Activated naive CD4-positive, alpha-beta T cell treated with anti-CD3 and anti-CD28 coated beads for 36 hours (primary cell): ENCODE measurements at regions of chr1 and their contacts with region 1.

Region 1: GRCh38 chr1:201468844-201469511 is at the start of gene PHLDA3:
- DNase-seq: peak; percentile 79
- H3K4me3 Mint-ChIP-seq: peak within 1 kb of the TSS; percentile 80
- H3K27ac Mint-ChIP-seq: peak within 1 kb of the TSS; percentile 44
- H3K4me1 Mint-ChIP-seq: peaks cover 6% of the 10 kb centered on the region
- H3K27me3 Mint-ChIP-seq: peaks cover 48% of the 10 kb centered on the region
- total RNA-seq, gene PHLDA3: 19.5 TPM

Region 2: DNA sequence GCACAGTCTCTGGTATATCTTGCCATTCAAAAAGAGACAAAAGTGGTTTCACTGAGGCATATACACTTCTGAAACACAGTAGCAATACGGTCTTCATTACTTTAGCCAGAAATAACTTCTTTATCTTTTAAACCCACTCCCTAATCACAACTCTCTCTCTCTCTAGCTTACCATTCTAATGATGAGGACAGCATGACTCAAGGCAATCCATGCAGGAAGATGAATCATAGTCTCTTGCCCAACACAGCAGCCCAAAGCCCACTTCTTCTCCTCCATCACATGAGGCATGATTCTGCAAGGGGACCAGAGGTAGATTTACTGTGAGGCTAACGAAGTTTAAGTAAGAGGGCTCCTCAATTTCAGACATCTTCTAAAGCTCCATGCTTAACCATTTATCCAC is 1726.4 kb before region 1 on chr1:
- CTCF ChIA-PET with region 1: no interaction called
- intact Hi-C with region 1: no loop called
- DNase-seq: no peak
- H3K4me3 Mint-ChIP-seq: no peak overlapping the region
- H3K27ac Mint-ChIP-seq: no peak overlapping the region
- H3K4me1 Mint-ChIP-seq: no peaks in the 10 kb centered on the region
- H3K27me3 Mint-ChIP-seq: peaks cover 12% of the 10 kb centered on the region

Region 3: DNA sequence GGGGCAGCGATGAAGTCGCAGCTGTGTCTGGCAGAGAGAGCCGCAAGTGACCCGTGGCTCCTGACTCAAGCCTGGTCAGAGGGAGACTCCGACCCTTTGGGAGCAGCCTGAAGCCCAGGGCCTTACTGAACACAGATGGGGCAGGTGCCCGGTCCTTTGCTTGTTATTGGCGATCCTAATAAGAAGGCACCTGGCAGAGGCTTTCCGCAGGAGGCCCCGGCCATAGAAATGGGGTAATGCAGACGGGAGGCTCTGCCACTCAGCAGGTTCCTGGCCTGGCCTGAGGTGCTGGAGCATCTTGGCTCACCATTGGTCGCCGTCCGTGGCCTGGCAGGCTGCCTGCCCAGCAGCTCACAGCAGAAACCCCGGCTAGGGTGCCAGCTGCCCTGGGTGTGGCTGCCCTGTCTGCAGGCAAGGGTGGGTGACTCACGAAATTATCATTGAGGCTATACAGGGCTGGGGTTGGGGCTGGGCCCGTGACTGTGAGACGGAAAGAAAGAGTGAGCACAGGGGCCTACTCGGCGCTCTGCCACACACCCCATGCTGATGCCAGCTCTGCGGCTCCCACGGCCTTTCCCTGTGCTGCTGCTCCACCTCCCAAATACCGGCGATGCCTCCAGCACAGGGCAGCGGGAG is 193.8 kb before region 1 on chr1:
- CTCF ChIA-PET with region 1: no interaction called
- intact Hi-C with region 1: no loop called
- DNase-seq: no peak
- H3K4me3 Mint-ChIP-seq: no peak overlapping the region
- H3K27ac Mint-ChIP-seq: no peak overlapping the region
- H3K4me1 Mint-ChIP-seq: no peaks in the 10 kb centered on the region
- H3K27me3 Mint-ChIP-seq: peaks cover 7% of the 10 kb centered on the region

Region 4: DNA sequence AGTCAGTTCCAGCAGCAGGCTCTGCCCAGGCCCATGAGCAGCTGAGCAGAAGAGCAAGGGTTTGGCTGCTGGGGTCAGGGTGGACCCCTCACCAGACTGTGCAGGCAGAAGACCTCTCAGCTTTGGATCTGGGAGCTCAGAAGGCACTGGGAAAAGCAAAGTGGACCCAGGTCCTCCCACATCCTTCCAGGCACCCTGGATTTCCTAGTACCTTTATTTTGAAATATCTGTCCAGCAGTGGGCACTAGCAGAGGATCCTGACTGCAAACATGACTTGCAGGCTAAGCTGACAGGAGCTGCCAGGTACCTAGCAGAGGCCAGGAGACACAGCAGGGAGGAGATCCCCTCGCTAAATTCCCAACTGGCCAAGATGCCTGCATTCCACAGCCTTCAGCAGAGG is 13.3 kb before region 1 on chr1:
- CTCF ChIA-PET with region 1: no interaction called
- intact Hi-C with region 1: loop called (anchors 1 kb)
- DNase-seq: no peak
- H3K4me3 Mint-ChIP-seq: no peak overlapping the region
- H3K27ac Mint-ChIP-seq: no peak overlapping the region
- H3K4me1 Mint-ChIP-seq: peaks cover 13% of the 10 kb centered on the region
- H3K27me3 Mint-ChIP-seq: peaks cover 17% of the 10 kb centered on the region